MCF 10A (cell line): ENCODE measurements at regions of chr6 and their contacts with region 1.

Region 1: DNA sequence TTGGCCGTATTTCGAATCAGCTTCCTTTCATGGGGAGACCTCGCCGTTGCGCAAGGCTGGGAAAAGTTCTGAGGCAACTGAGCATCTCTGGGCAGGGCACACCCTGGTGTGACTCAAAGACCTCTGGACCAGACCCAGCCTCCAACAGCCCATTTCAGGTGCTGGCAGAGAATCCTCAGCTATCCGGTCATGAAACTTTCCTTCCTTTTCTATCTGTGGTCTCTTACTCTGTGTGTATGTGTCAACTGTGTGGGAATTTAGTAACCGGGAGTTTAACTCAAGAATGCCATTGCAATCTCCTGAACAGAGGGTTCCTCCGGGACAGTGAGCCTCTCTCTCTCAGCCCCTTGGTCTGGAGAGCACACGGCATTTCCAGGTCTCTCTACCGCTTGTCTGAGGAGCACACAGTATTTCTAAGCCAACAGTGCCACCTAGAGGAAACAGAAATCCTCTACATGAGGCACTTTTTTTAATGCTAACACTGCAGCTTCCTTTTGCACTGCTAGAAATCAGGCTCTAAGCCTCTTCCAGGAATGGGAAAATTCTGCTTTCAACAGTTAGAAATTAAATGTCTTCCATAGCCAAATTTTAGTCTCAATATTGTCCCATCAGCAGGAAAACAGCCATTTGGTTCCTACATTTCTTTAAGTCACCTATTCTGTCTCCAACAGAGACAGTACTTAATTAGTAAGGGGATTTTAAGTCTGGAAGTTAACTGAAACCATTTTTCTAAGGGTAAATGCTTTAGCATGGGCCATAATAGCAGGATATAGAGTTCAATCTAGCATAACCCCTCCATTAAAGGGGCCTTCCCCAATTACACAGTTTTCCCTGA is 32.7 kb downstream of the PLN start:
- DNase-seq: peak; percentile 94
- H3K4me3 Mint-ChIP-seq: peak overlapping the region; percentile 71
- H3K27ac Mint-ChIP-seq: peak overlapping the region; percentile 29
- H3K4me1 Mint-ChIP-seq: peaks cover 16% of the 10 kb centered on the region
- H3K27me3 Mint-ChIP-seq: no peaks in the 10 kb centered on the region
- CTCF ChIP-seq: peak; percentile 68

Region 2: GRCh38 chr6:117976030-117976651 is 604.7 kb before region 1 on chr6:
- CTCF ChIA-PET with region 1: no interaction called
- POLR2A ChIA-PET with region 1: no interaction called
- intact Hi-C with region 1: loop called (anchors 1 kb)
- DNase-seq: peak; percentile 65
- H3K4me3 Mint-ChIP-seq: no peak overlapping the region
- H3K27ac Mint-ChIP-seq: no peak overlapping the region
- H3K4me1 Mint-ChIP-seq: no peaks in the 10 kb centered on the region
- H3K27me3 Mint-ChIP-seq: peaks cover 26% of the 10 kb centered on the region
- CTCF ChIP-seq: peak; percentile 40

Region 3: DNA sequence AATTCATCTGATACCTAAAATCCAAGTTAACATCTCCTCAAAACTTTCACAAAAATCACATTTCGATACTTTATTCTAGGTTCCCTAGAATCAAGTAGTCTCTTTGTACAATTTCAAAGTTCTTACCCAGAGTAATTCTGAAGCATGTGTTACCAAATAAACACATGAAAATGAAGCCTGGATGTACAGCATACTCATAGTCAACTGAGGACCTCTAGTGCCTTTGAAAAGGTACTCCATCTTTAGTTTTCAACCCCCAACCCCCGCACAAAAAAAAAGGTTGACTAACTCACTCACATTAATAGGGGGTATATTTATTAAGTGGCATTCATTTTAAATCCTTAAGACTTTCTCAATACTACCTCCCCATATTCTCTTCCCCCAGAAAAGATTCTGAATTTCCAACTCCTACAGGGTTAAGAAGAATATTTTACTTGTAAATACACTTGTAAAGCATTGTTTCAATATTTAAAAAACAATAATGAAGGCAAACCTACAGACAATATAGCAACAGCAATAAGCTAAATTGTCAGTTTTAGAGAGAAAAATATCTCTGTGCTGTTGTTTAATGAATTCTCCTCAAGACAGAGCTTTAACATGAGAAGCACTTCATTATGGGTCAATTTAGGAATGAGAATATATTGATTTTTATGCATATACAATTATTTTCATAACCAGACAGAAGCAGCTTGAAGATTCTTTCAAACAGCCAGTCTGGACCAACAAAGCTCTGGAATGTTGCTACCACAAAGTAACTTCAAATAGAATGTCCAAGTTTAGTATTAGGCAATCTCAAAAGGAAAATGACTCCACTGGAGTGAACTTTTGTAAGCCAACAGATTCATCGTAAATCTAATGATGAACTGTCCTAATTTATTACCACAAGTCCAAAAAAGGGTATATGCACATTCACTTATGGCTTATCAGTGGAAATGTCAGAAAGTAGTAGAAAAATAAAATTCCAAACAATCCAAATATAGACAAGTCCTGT is 29.4 kb before region 1 on chr6:
- CTCF ChIA-PET with region 1: interaction called, 10 read pairs
- POLR2A ChIA-PET with region 1: no interaction called
- intact Hi-C with region 1: no loop called
- DNase-seq: peak; percentile 56
- H3K4me3 Mint-ChIP-seq: no peak overlapping the region
- H3K27ac Mint-ChIP-seq: no peak overlapping the region
- H3K4me1 Mint-ChIP-seq: peaks cover 12% of the 10 kb centered on the region
- H3K27me3 Mint-ChIP-seq: no peaks in the 10 kb centered on the region
- CTCF ChIP-seq: peak; percentile 59

Region 4: GRCh38 chr6:118618679-118619377 is 38.0 kb after region 1 on chr6:
- CTCF ChIA-PET with region 1: interaction called, 7 read pairs
- POLR2A ChIA-PET with region 1: no interaction called
- intact Hi-C with region 1: loop called (anchors 2 kb)
- DNase-seq: peak; percentile 67
- H3K4me3 Mint-ChIP-seq: no peak overlapping the region
- H3K27ac Mint-ChIP-seq: no peak overlapping the region
- H3K4me1 Mint-ChIP-seq: peaks cover 7% of the 10 kb centered on the region
- H3K27me3 Mint-ChIP-seq: no peaks in the 10 kb centered on the region
- CTCF ChIP-seq: peak; percentile 89

Region 5: GRCh38 chr6:118719351-118720124 is 138.7 kb after region 1 on chr6:
- CTCF ChIA-PET with region 1: no interaction called
- POLR2A ChIA-PET with region 1: no interaction called
- intact Hi-C with region 1: no loop called
- DNase-seq: no peak
- H3K4me3 Mint-ChIP-seq: no peak overlapping the region
- H3K27ac Mint-ChIP-seq: no peak overlapping the region
- H3K4me1 Mint-ChIP-seq: peaks cover 4% of the 10 kb centered on the region
- H3K27me3 Mint-ChIP-seq: no peaks in the 10 kb centered on the region
- CTCF ChIP-seq: no peak

Region 6: DNA sequence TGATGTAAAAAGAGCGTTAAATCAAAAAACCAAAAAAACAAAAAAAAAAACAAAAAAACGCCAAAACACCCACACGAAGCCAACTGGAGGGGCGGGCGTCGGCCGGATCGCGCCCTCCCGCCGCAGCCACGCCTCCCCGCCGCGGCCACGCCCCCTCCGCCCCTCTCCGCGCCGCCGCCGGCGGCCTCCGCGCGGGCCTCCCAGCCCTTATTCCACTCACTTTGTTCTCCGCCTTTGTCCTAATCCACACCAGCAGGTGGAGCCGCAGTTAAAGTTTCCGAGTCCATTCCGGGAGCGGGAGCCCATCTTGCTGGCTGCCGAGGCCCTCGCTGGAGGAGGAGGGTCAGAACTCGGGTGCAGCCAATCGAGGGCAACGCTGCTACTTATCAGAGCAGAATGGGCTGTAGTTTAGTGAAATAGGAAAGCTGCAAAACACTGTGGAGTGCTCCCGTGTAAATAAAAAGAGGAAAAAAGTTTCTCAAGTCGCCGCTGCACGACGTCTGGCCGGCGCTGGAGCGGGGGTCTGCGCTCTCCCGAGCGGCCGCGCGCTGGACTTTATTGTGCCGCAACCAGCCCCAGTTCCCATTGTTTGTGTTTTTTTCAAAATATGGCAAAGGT is 313.1 kb after region 1 on chr6 and contains the start of gene ASF1A:
- CTCF ChIA-PET with region 1: no interaction called
- POLR2A ChIA-PET with region 1: interaction called, 3 read pairs
- intact Hi-C with region 1: loop called (anchors 10 kb)
- DNase-seq: peak; percentile 99
- H3K4me3 Mint-ChIP-seq: peak within 1 kb of the TSS; percentile 95
- H3K27ac Mint-ChIP-seq: peak within 1 kb of the TSS; percentile 95
- H3K4me1 Mint-ChIP-seq: peaks cover 21% of the 10 kb centered on the region
- H3K27me3 Mint-ChIP-seq: no peaks in the 10 kb centered on the region
- CTCF ChIP-seq: peak; percentile 52
- total RNA-seq, gene ASF1A: 30.4 and 36.4 TPM in 2 replicates